OCI-LY7 (cell line): ENCODE measurements at regions of chr4 and their contacts with region 1.

Region 1: DNA sequence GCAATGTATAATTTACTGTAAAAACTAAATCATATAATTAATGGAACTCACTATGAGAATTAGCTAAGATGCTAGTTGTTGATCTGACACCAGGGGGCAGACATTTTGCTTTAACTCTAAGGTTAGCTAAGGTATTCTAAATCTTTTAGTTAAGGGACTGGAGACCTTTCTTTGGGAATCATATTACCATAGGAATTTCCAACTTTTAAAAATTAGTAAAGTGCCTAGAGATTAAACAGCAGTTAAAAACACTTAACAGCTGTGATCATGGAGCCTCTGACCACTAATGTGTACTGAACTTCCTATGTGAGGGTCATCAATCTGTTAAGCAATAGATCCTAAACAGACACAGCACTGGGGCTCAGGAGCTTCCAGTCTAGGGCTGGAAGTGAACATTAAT is 226.6 kb downstream of the NSUN7 start:
- DNase-seq: peak; percentile 75
- H3K4me3 ChIP-seq: no peak overlapping the region
- H3K27ac ChIP-seq: no peak overlapping the region
- H3K4me1 ChIP-seq: peaks cover 35% of the 10 kb centered on the region
- CTCF ChIP-seq: peak; percentile 96

Region 2: DNA sequence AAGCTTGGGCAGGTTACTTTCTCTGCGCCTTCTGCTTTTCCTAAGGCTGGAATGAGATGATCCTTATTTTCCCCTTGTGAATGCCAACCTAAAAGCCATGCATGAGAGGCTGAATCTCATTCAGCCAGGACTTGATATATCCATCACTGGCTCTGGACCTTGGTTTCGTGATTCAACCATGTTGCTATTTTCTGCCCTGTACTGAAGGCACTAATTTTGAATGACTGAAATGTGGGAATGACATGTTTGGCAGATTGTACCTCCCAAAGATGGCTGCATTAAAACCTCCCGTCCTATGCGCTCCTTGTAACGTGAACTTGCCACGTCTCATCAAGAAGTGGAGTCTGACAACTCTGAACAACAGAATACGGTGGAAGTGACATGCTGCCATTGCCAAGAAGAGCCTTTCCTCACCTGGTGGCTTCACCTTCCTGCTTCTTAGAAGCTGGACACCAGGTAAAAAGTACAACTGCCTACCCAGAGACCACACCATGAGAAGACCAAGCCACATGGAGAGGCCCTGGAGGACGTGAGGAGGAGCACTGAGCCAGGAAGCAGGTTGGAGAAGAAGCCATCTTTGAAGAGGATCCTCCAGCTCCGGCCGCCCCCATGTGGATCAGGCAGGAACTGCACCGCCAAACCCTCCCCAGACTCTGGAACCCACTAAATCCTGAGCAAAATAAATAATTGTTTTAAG is 52.1 kb before region 1 on chr4:
- CTCF ChIA-PET with region 1: no interaction called
- POLR2A ChIA-PET with region 1: interaction called, 3 read pairs
- intact Hi-C with region 1: loop called (anchors 5 kb)
- DNase-seq: peak; percentile 74
- H3K4me3 ChIP-seq: no peak overlapping the region
- H3K27ac ChIP-seq: no peak overlapping the region
- H3K4me1 ChIP-seq: no peaks in the 10 kb centered on the region
- CTCF ChIP-seq: peak; percentile 94

Region 3: GRCh38 chr4:40953283-40954087 is 22.9 kb before region 1 on chr4:
- CTCF ChIA-PET with region 1: no interaction called
- POLR2A ChIA-PET with region 1: interaction called, 12 read pairs
- intact Hi-C with region 1: no loop called
- DNase-seq: no peak
- H3K4me3 ChIP-seq: no peak overlapping the region
- H3K27ac ChIP-seq: no peak overlapping the region
- H3K4me1 ChIP-seq: peaks cover 11% of the 10 kb centered on the region
- CTCF ChIP-seq: no peak

Region 4: DNA sequence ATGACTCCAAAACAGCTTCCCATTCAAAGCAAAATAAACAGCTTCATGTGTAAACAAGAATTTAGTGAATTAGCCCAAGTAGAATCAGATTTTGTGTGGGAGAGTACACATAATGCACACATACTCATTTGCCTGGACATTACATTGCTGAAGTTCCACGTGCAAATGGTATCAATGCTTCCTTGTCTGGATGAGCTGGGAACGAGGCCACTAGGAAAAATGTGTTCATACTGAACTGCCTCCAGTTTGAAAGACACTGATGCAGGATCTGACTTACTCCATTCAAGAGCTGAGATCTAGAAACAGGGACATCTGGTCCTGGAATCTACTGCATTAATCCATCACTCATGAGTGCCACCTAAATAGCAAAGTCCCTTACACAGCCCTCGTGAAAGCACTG is 10.0 kb after region 1 on chr4:
- CTCF ChIA-PET with region 1: interaction called, 4 read pairs
- POLR2A ChIA-PET with region 1: interaction called, 127 read pairs
- intact Hi-C with region 1: loop called (anchors 2 kb)
- DNase-seq: no peak
- H3K4me3 ChIP-seq: no peak overlapping the region
- H3K27ac ChIP-seq: no peak overlapping the region
- H3K4me1 ChIP-seq: peaks cover 84% of the 10 kb centered on the region
- CTCF ChIP-seq: no peak

Region 5: GRCh38 chr4:42596918-42597317 is 1620.6 kb after region 1 on chr4:
- CTCF ChIA-PET with region 1: no interaction called
- POLR2A ChIA-PET with region 1: no interaction called
- intact Hi-C with region 1: no loop called
- DNase-seq: no peak
- H3K4me3 ChIP-seq: no peak overlapping the region
- H3K27ac ChIP-seq: no peak overlapping the region
- H3K4me1 ChIP-seq: peaks cover 9% of the 10 kb centered on the region
- CTCF ChIP-seq: no peak